Stomach (tissue), 19 donors: ENCODE measurements at regions of chr6 and their contacts with region 1.

Region 1: GRCh38 chr6:87483929-87484328 is 11.2 kb downstream of the SLC35A1 start:
- DNase-seq: no peak
- H3K4me3 ChIP-seq: no peak overlapping the region
- H3K27ac ChIP-seq: no peak overlapping the region
- H3K4me1 ChIP-seq: no peaks in the 10 kb centered on the region
- H3K27me3 ChIP-seq: no peaks in the 10 kb centered on the region
- CTCF ChIP-seq: no peak
- EP300 ChIP-seq: no peak
- POLR2A ChIP-seq: no peak

Region 2: GRCh38 chr6:87589693-87590549 is 106.0 kb after region 1 on chr6 and contains the starts of genes ORC3 and RARS2:
- intact Hi-C with region 1: loop called (anchors 10 kb)
- DNase-seq: peak; percentile 97 to 99
- H3K4me3 ChIP-seq: peak within 1 kb of the TSS; percentile 66 to 85 (median 72)
- H3K27ac ChIP-seq: peak within 1 kb of the TSS; percentile 81 to 91 (median 84)
- H3K4me1 ChIP-seq: peaks cover 21 to 60% (median 42%) of the 10 kb centered on the region in 4 donors
- H3K27me3 ChIP-seq: no peaks in the 10 kb centered on the region
- CTCF ChIP-seq: no peak
- EP300 ChIP-seq: no peak
- POLR2A ChIP-seq: peak in 1 of 4 donors; percentile 76
- total RNA-seq, gene ORC3: 5.8 to 33.8 (median 14.3) TPM
- total RNA-seq, gene RARS2: 20.0 to 126 (median 61.7) TPM

Region 3: DNA sequence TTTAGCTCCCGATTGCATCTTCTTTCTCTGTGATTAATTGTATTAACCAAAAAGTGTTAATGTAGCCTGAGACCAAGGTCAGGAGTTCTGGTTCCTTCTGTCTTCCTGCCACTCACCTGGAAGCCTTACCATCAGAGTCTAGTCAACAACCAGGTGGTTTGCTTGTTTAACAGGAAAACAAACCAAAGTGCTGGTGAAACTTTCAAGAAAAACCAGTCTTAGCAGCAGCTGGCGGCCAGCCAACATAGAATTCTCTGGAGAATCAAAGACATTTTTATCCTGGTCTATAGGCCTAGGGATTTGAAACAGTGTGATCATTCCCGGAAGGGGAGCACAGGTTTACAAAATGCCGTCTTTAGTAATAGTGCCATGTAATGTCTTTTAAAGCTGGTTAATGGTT is 364.6 kb after region 1 on chr6:
- intact Hi-C with region 1: no loop called
- DNase-seq: peak; percentile 36 to 73
- H3K4me3 ChIP-seq: no peak overlapping the region
- H3K27ac ChIP-seq: no peak overlapping the region
- H3K4me1 ChIP-seq: no peaks in the 10 kb centered on the region
- H3K27me3 ChIP-seq: no peaks in the 10 kb centered on the region
- CTCF ChIP-seq: no peak
- EP300 ChIP-seq: no peak
- POLR2A ChIP-seq: no peak